Activated T-helper 2 cell treated with anti-CD3 and anti-CD28 coated beads, Interferon-gamma antibody, Interleukin-2, Interleukin-4, amounts not matched to agents 10 μg/mL and 5 μg/mL and 100 μg/mL, durations not matched to agents 14 hours and 24 hours and 36 hours (primary cell): ENCODE measurements at regions of chr3 and their contacts with region 1.

Region 1: GRCh38 chr3:188664795-188665194 is 507.0 kb upstream of the TPRG1 start:
- DNase-seq: no peak
- H3K4me3 Mint-ChIP-seq: no peak overlapping the region
- H3K27ac Mint-ChIP-seq: no peak overlapping the region
- H3K4me1 Mint-ChIP-seq: peaks cover 8% of the 10 kb centered on the region
- H3K27me3 Mint-ChIP-seq: no peaks in the 10 kb centered on the region

Region 2: GRCh38 chr3:188607805-188608315 is 56.9 kb before region 1 on chr3:
- intact Hi-C with region 1: no loop called
- DNase-seq: no peak
- H3K4me3 Mint-ChIP-seq: no peak overlapping the region
- H3K27ac Mint-ChIP-seq: no peak overlapping the region
- H3K4me1 Mint-ChIP-seq: peaks cover 2% of the 10 kb centered on the region
- H3K27me3 Mint-ChIP-seq: peaks cover 2% of the 10 kb centered on the region

Region 3: GRCh38 chr3:188649521-188649920 is 15.3 kb before region 1 on chr3:
- intact Hi-C with region 1: loop called (anchors 2 kb)
- DNase-seq: no peak
- H3K4me3 Mint-ChIP-seq: no peak overlapping the region
- H3K27ac Mint-ChIP-seq: no peak overlapping the region
- H3K4me1 Mint-ChIP-seq: no peaks in the 10 kb centered on the region
- H3K27me3 Mint-ChIP-seq: no peaks in the 10 kb centered on the region

Region 4: DNA sequence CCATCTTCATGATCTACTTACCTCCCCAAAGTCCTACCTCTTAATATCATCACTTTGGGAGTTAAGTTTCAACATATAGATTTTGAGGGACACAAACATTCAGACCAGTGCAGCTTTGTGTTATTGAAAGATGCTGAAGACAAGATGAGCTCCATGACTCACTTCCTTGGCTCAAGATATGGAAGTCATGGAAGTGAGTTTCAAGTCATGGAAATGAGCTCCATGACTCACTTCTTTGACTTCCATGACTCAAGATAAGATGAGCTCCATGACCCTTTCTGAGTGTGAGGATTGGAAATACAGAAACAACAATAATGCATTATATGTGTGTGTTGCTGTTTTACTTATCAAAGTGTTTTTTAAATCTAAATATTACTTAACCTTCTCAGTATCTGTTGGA is 336.8 kb after region 1 on chr3:
- intact Hi-C with region 1: no loop called
- DNase-seq: no peak
- H3K4me3 Mint-ChIP-seq: no peak overlapping the region
- H3K27ac Mint-ChIP-seq: no peak overlapping the region
- H3K4me1 Mint-ChIP-seq: no peaks in the 10 kb centered on the region
- H3K27me3 Mint-ChIP-seq: peaks cover 13% of the 10 kb centered on the region